Right ventricle myocardium inferior (tissue), 1 donor: ENCODE measurements at regions of chr9 and their contacts with region 1.

Region 1: DNA sequence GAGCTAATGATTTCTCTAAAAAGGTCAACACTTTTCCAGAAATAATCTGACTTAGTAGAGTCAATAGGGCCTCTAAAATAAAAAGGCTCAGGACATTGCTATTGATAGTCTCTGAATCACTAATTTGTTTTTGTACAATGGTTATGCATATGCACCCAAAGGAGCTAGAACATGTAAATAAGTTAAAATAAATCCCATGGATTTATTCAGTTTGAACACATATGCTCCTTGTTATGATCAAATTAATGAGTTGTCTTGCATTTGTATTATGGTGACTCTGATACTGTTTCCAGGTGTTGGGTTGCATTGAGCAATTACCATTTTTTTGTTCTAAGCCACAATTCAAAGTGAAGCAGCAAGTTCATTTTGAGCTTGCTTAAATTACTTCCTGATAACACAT is 276.0 kb upstream of the TUSC1 start:
- DNase-seq: no peak
- ATAC-seq: no peak

Region 2: GRCh38 chr9:25733336-25733982 is 220.8 kb before region 1 on chr9:
- intact Hi-C with region 1: loop called (anchors 10 kb)
- DNase-seq: no peak
- ATAC-seq: no peak